Sciatic nerve (tissue), 2 donors: ENCODE measurements at regions of chr11 and their contacts with region 1.

Region 1: GRCh38 chr11:64846998-64847666 is 2.7 kb upstream of the CDC42BPG start:
- DNase-seq: peak; percentile 97
- ATAC-seq: peak; percentile 90

Region 2: DNA sequence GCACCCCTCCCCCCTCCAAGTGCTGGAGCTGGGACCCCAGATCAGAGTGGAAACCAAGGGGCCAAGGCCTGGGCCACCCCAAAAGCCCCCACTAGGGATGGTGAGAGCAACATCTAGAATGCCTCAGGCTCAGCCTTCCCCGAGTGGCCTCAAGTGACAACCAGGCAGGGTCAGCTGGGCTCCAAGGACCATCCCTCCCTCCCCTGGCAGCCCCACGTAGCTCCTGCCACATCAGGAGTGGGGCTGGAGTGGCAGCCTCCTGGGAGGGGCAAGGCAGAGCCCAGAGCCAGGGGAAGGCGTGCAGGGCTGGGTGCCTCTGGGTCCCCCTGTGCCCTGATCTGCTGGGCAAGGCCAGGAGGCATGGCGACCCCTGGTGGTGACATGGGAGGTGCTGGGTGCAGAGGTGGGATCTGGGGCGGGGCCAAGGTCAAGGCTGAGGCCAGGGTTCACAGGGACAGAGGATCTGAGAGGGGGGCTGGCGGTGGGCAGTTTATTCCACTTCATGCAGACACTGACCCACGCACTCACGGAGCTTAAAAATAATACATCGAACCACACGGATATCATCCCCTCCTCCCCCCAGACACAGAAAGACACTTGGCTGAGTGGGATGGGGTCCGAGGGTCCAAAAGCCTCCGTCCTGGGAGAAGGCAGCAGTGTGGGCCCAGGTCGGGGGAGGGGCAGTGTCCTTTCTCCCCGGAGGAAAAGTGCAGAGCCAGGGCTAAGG is 47.1 kb after region 1 on chr11:
- intact Hi-C with region 1: loop called (anchors 5 kb)
- DNase-seq: peak; percentile 93
- ATAC-seq: peak; percentile 83